CD14-positive monocyte (primary cell): ENCODE measurements at regions of chr2 and their contacts with region 1.

Region 1: GRCh38 chr2:14074691-14075090 is 557.8 kb upstream of the LRATD1 start:
- DNase-seq: no peak
- H3K4me3 ChIP-seq: no peak overlapping the region
- H3K4me3 Mint-ChIP-seq: no peak overlapping the region
- H3K27ac ChIP-seq: no peak overlapping the region
- H3K27ac Mint-ChIP-seq: no peak overlapping the region
- H3K4me1 ChIP-seq: no peaks in the 10 kb centered on the region
- H3K4me1 Mint-ChIP-seq: no peaks in the 10 kb centered on the region
- H3K27me3 ChIP-seq: no peaks in the 10 kb centered on the region
- H3K27me3 Mint-ChIP-seq: peaks cover 0 to 2% (median 0%) of the 10 kb centered on the region in 3 donors
- CTCF ChIP-seq: no peak

Region 2: GRCh38 chr2:14016289-14016955 is 58.3 kb before region 1 on chr2:
- intact Hi-C with region 1: loop called in 1 of 2 experiments (anchors 2 kb)
- DNase-seq: no peak
- H3K4me3 ChIP-seq: no peak overlapping the region
- H3K4me3 Mint-ChIP-seq: no peak overlapping the region
- H3K27ac ChIP-seq: no peak overlapping the region
- H3K27ac Mint-ChIP-seq: no peak overlapping the region
- H3K4me1 ChIP-seq: no peaks in the 10 kb centered on the region
- H3K4me1 Mint-ChIP-seq: no peaks in the 10 kb centered on the region
- H3K27me3 ChIP-seq: no peaks in the 10 kb centered on the region
- H3K27me3 Mint-ChIP-seq: peaks cover 0 to 1% (median 0%) of the 10 kb centered on the region in 3 donors
- CTCF ChIP-seq: no peak

Region 3: GRCh38 chr2:14120376-14120775 is 45.7 kb after region 1 on chr2:
- intact Hi-C with region 1: no loop called
- DNase-seq: no peak
- H3K4me3 ChIP-seq: no peak overlapping the region
- H3K4me3 Mint-ChIP-seq: no peak overlapping the region
- H3K27ac ChIP-seq: no peak overlapping the region
- H3K27ac Mint-ChIP-seq: no peak overlapping the region
- H3K4me1 ChIP-seq: no peaks in the 10 kb centered on the region
- H3K4me1 Mint-ChIP-seq: no peaks in the 10 kb centered on the region
- H3K27me3 ChIP-seq: no peaks in the 10 kb centered on the region
- H3K27me3 Mint-ChIP-seq: peaks cover 0 to 2% (median 0%) of the 10 kb centered on the region in 3 donors
- CTCF ChIP-seq: no peak

Region 4: GRCh38 chr2:14199040-14199439 is 124.3 kb after region 1 on chr2:
- intact Hi-C with region 1: no loop called
- DNase-seq: no peak
- H3K4me3 ChIP-seq: no peak overlapping the region
- H3K4me3 Mint-ChIP-seq: no peak overlapping the region
- H3K27ac ChIP-seq: no peak overlapping the region
- H3K27ac Mint-ChIP-seq: no peak overlapping the region
- H3K4me1 ChIP-seq: no peaks in the 10 kb centered on the region
- H3K4me1 Mint-ChIP-seq: no peaks in the 10 kb centered on the region
- H3K27me3 ChIP-seq: no peaks in the 10 kb centered on the region
- H3K27me3 Mint-ChIP-seq: no peaks in the 10 kb centered on the region
- CTCF ChIP-seq: no peak